Activated CD4-positive, alpha-beta T cell treated with anti-CD3 and anti-CD28 coated beads for 36 hours (primary cell): ENCODE measurements at regions of chrX and their contacts with region 1.

Region 1: GRCh38 chrX:1580735-1581531 is 10.5 kb upstream of the AKAP17A start:
- DNase-seq: peak; percentile 90
- ATAC-seq: peak; percentile 78
- H3K4me3 Mint-ChIP-seq: no peak overlapping the region
- H3K27ac Mint-ChIP-seq: no peak overlapping the region
- H3K4me1 Mint-ChIP-seq: peaks cover 19% of the 10 kb centered on the region
- H3K27me3 Mint-ChIP-seq: no peaks in the 10 kb centered on the region

Region 2: DNA sequence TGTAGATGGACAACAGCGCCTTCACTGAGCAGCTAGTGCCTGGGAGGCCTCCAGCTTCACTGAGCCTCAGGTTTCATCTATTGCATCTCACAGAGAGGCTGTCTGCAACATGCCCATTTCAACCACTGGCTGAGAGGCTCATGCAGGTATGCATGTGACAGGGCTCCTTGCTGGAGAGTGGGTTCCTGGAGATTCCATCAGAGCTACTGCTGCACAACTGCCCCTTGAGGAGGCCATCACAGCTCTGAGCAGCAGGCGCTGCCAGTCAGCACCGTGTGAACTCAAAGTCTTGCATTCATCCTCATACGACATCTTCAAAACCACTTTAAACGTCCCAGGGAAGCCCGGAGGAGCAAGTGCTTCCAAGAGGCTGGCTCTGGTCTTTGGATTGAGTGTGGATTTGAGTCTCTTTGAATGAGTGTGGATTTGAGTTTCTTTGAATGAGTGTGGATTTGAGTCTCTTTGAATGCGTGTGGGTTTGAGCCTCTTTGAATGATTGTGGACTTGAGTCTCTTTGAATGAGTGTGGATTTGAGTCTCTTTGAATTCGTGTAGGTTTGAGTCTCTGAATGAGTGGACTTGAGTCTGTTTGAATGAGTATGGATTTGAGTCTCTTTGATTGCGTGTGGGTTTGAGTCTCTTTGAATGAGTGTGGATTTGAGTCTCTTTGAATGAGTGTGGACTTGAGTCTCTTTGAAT is 52.6 kb before region 1 on chrX:
- CTCF ChIA-PET with region 1: no interaction called
- POLR2A ChIA-PET with region 1: no interaction called
- intact Hi-C with region 1: loop called in 1 of 2 experiments (anchors 1 kb)
- DNase-seq: peak; percentile 40
- ATAC-seq: peak; percentile 72
- H3K4me3 Mint-ChIP-seq: no peak overlapping the region
- H3K27ac Mint-ChIP-seq: no peak overlapping the region
- H3K4me1 Mint-ChIP-seq: peaks cover 8% of the 10 kb centered on the region
- H3K27me3 Mint-ChIP-seq: no peaks in the 10 kb centered on the region

Region 3: GRCh38 chrX:1558761-1559468 is 22.0 kb before region 1 on chrX:
- CTCF ChIA-PET with region 1: no interaction called
- POLR2A ChIA-PET with region 1: no interaction called
- intact Hi-C with region 1: loop called in 1 of 2 experiments (anchors 1 kb)
- DNase-seq: no peak
- ATAC-seq: no peak
- H3K4me3 Mint-ChIP-seq: no peak overlapping the region
- H3K27ac Mint-ChIP-seq: no peak overlapping the region
- H3K4me1 Mint-ChIP-seq: peaks cover 34% of the 10 kb centered on the region
- H3K27me3 Mint-ChIP-seq: no peaks in the 10 kb centered on the region

Region 4: GRCh38 chrX:1727531-1728027 is 146.6 kb after region 1 on chrX:
- CTCF ChIA-PET with region 1: no interaction called
- POLR2A ChIA-PET with region 1: no interaction called
- intact Hi-C with region 1: no loop called
- DNase-seq: no peak
- ATAC-seq: no peak
- H3K4me3 Mint-ChIP-seq: no peak overlapping the region
- H3K27ac Mint-ChIP-seq: no peak overlapping the region
- H3K4me1 Mint-ChIP-seq: no peaks in the 10 kb centered on the region
- H3K27me3 Mint-ChIP-seq: no peaks in the 10 kb centered on the region